PC-3 (cell line): ENCODE measurements at regions of chr14 and their contacts with region 1.

Region 1: DNA sequence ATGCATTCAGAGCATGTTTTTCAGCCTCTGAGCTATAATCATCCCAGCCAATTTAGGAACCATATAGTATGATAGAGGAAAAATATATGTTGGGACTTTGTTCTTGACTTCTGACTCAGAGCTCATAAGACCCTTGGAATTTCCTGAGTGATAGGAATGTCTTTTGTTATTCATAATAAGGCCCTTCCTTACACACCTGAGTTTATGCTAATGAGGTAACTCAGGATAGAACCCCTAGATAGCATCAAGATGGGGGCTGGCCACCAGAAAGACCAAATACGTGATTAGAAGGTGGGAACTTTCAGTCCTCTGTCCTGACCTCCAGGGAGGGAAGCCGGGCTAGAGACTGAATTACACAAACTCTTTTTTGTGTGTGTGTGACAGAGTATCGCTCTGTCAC is 32.4 kb upstream of the PLEK2 start:
- DNase-seq: peak; percentile 29
- ATAC-seq: no peak
- H3K4me3 ChIP-seq: no peak overlapping the region
- H3K27ac ChIP-seq: no peak overlapping the region
- H3K4me1 ChIP-seq: peaks cover 4% of the 10 kb centered on the region; the same call in 1 of the 2 replicates
- H3K27me3 ChIP-seq: no peaks in the 10 kb centered on the region
- CTCF ChIP-seq: no peak

Region 2: GRCh38 chr14:67457782-67458181 is 13.4 kb after region 1 on chr14:
- CTCF ChIA-PET with region 1: no interaction called
- POLR2A ChIA-PET with region 1: no interaction called
- intact Hi-C with region 1: loop called (anchors 2 kb)
- DNase-seq: peak; percentile 60
- ATAC-seq: peak; percentile 97
- H3K4me3 ChIP-seq: peak overlapping the region; percentile 10; the same call in 1 of the 2 replicates
- H3K27ac ChIP-seq: no peak overlapping the region
- H3K4me1 ChIP-seq: peaks cover 5% of the 10 kb centered on the region; the same call in 1 of the 2 replicates
- H3K27me3 ChIP-seq: peaks cover 16% of the 10 kb centered on the region; the same call in 1 of the 2 replicates
- CTCF ChIP-seq: no peak